Activated T-helper 2 cell treated with anti-CD3 and anti-CD28 coated beads, Interferon-gamma antibody, Interleukin-2, Interleukin-4, amounts not matched to agents 10 μg/mL and 5 μg/mL and 100 μg/mL, durations not matched to agents 14 hours and 24 hours and 36 hours (primary cell): ENCODE measurements at regions of chr1 and their contacts with region 1.

Region 1: DNA sequence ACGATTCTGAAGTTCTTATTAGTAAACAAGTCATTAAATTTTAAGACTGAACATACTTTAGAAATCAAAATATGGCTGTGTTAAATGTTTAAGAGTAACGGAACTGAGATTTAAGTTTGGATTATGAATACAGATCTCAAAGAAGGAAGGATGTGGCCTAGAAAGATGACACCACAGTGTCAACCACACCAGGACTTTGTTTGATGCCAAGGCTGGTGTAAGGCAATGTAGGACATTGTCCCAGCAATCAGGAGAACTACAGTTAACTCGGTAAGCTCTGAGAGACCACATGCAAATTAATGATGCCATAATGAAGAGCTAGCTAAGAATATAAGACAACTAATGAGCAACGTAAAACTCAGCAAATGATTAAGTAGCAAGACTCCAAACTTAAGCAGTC is 932.9 kb downstream of the ADGRL2 start:
- DNase-seq: no peak
- H3K4me3 Mint-ChIP-seq: no peak overlapping the region
- H3K27ac Mint-ChIP-seq: no peak overlapping the region
- H3K4me1 Mint-ChIP-seq: no peaks in the 10 kb centered on the region
- H3K27me3 Mint-ChIP-seq: no peaks in the 10 kb centered on the region

Region 2: GRCh38 chr1:82441402-82441801 is 292.2 kb before region 1 on chr1:
- intact Hi-C with region 1: no loop called
- DNase-seq: no peak
- H3K4me3 Mint-ChIP-seq: no peak overlapping the region
- H3K27ac Mint-ChIP-seq: no peak overlapping the region
- H3K4me1 Mint-ChIP-seq: no peaks in the 10 kb centered on the region
- H3K27me3 Mint-ChIP-seq: no peaks in the 10 kb centered on the region

Region 3: DNA sequence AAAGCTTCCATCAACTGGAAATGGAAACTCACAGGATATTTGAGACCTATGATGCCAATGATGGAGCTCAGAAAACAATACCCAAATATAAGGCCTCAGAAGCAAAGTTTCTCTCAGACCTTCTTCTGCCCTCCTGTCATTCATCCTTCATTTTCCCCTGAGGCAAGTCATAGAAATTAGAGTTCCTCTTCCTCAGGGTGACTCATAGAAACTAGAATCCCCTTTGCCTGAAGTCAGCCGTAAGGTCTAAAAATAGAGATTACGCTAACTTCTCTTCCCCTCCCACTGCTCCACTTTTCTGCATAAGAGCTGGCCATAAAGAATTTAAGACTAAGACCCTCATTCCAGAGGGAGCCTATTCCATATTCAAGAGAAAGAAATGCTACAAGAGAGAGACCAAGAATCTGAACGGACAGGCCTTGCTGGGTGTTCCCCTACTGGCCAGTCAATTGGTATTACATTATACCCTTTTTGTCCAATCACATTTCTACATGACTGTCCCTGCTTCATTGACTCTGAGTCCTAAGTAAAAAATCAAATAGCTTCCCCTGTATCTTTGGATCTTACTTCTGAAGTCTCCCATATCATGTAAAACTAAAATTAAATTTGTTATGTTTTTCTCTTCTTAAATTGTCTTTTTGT is 62.0 kb after region 1 on chr1:
- intact Hi-C with region 1: loop called (anchors 2 kb)
- DNase-seq: no peak
- H3K4me3 Mint-ChIP-seq: no peak overlapping the region
- H3K27ac Mint-ChIP-seq: no peak overlapping the region
- H3K4me1 Mint-ChIP-seq: no peaks in the 10 kb centered on the region
- H3K27me3 Mint-ChIP-seq: no peaks in the 10 kb centered on the region